HEK293 (cell line): ENCODE measurements at regions of chr11 and their contacts with region 1.

Region 1: DNA sequence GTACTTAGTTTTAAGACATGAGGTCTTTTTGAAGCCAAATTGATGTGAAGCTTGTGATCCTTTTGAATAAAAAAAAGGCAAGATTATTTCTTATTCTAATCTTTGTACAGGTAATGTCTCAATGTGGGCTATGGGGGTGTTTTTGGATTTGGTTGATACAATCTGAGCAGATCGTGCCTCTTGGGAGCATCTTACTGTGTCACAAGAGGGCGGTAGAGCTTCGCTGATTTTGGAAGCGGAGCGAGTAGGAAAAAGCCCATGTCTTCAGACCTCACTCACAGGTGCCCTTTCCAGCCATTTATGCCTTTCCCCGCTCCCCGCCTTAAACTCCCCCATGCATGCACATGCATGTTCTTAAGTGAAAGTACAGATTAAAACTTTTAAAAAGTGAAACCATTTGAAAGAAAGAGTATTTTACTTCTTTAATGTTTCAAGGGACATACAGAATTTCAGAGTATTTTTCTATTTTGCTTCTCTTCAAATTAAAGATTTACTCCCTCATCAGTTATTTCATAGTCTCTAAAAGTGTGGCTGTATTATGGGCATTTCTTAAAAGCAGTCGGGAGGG is 18.8 kb downstream of the DDX25 start:
- H3K4me3 ChIP-seq: no peak overlapping the region
- H3K27ac ChIP-seq: no peak overlapping the region
- H3K4me1 ChIP-seq: no peaks in the 10 kb centered on the region
- CTCF ChIP-seq: peak; percentile 60

Region 2: DNA sequence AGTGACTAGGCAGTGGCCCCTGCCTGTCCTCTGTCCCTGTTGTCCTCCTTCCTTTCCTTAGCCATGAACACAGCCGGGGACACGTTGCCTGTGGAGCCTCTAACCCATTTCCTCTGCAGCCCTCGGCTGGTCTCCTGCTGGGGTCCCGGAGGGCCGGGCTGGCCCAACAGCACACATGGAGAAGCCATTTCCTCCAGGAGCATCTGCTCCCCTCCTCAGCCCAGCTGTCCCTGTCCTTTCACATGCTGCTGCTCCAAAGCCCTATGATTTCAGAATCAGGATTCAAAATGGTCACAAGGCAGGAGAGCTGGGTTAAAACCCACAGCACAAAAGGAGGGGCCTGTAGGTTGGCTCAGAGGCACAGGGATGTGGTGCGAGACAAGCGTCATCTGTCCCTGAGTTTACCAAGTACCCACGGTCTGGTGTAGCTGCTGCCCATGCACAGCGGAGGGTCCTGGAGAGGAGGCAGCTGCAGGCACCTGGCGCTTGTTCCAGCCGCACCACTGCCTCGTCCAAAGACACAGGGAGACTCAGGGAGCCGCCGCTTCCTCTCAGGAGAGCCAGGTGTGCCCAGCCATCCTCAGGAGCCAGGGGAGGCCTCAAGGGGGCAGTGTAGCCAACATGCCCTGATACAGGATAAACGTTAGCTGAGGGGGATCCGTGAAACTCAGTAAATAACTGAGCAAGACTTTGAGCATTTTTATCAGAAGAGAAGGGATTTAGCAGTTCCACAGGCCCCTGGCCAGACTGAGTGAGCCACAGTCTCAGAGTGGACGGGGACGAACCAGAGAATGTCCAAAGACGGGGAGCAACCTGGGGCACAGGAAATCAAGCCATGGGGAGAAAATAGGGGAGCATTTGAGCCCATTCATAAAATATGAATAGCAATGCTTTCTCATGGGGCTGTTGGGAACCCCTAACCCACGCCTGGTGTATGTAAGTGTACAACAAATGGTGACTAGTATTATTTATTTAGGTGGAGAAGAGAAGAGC is 18.8 kb after region 1 on chr11:
- CTCF ChIA-PET with region 1: interaction called, 16 read pairs
- POLR2A ChIA-PET with region 1: no interaction called
- H3K4me3 ChIP-seq: no peak overlapping the region
- H3K27ac ChIP-seq: no peak overlapping the region
- H3K4me1 ChIP-seq: no peaks in the 10 kb centered on the region
- CTCF ChIP-seq: peak; percentile 32; the same call in 1 of the 2 replicates